ENCODE measurements at regions of chr1 and their contacts with region 1.

Region 1: GRCh38 chr1:206725109-206725963 is 40.6 kb downstream of the MAPKAPK2 start:
- DNase-seq: peak in 4 of 5 donors; percentile 47 to 60 (median 56)
- H3K4me3 ChIP-seq: no peak overlapping the region
- H3K4me3 Mint-ChIP-seq: peak overlapping the region in 2 of 8 donors; percentile 43 to 57
- H3K27ac ChIP-seq: no peak overlapping the region
- H3K27ac Mint-ChIP-seq: peak overlapping the region in 6 of 7 donors; percentile 60 to 90 (median 76)
- H3K4me1 ChIP-seq: peaks cover 32% of the 10 kb centered on the region
- H3K4me1 Mint-ChIP-seq: peaks cover 33 to 61% (median 46%) of the 10 kb centered on the region in 4 donors
- H3K27me3 ChIP-seq: no peaks in the 10 kb centered on the region
- H3K27me3 Mint-ChIP-seq: no peaks in the 10 kb centered on the region

Region 2: DNA sequence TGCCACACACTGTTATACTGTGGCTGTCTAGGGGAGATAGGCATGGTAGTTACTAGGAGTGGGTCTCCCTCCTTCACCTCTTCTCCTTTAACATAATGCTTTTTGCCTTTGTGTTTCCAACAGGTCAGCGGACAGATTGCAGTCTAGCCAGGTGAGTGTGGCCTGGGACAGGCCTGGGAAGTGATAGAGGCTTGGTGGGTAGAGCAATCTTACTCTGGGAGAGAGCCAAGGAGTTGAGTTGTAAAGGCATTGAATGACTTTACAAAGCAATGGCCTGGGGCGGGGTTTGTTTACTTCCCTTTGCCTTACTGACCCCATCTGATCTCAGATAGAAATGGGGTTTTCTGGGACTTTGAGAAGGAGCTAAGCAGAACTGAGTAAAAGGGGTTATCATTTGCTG is 306.1 kb before region 1 on chr1:
- CTCF ChIA-PET with region 1: no interaction called
- POLR2A ChIA-PET with region 1: no interaction called
- intact Hi-C with region 1: no loop called
- DNase-seq: no peak
- H3K4me3 ChIP-seq: no peak overlapping the region
- H3K4me3 Mint-ChIP-seq: no peak overlapping the region
- H3K27ac ChIP-seq: no peak overlapping the region
- H3K27ac Mint-ChIP-seq: peak overlapping the region in 1 of 7 donors; percentile 67
- H3K4me1 ChIP-seq: no peaks in the 10 kb centered on the region
- H3K4me1 Mint-ChIP-seq: no peaks in the 10 kb centered on the region
- H3K27me3 ChIP-seq: no peaks in the 10 kb centered on the region
- H3K27me3 Mint-ChIP-seq: no peaks in the 10 kb centered on the region

Region 3: GRCh38 chr1:206706298-206706791 is 19.0 kb before region 1 on chr1:
- CTCF ChIA-PET with region 1: interaction called, 92 read pairs
- POLR2A ChIA-PET with region 1: no interaction called
- intact Hi-C with region 1: no loop called
- DNase-seq: no peak
- H3K4me3 ChIP-seq: no peak overlapping the region
- H3K4me3 Mint-ChIP-seq: peak overlapping the region in 4 of 8 donors; percentile 47 to 69 (median 62)
- H3K27ac ChIP-seq: no peak overlapping the region
- H3K27ac Mint-ChIP-seq: peak overlapping the region in 5 of 7 donors; percentile 14 to 39 (median 28)
- H3K4me1 ChIP-seq: peaks cover 89% of the 10 kb centered on the region
- H3K4me1 Mint-ChIP-seq: peaks cover 70 to 90% (median 81%) of the 10 kb centered on the region in 4 donors
- H3K27me3 ChIP-seq: no peaks in the 10 kb centered on the region
- H3K27me3 Mint-ChIP-seq: no peaks in the 10 kb centered on the region

Region 4: DNA sequence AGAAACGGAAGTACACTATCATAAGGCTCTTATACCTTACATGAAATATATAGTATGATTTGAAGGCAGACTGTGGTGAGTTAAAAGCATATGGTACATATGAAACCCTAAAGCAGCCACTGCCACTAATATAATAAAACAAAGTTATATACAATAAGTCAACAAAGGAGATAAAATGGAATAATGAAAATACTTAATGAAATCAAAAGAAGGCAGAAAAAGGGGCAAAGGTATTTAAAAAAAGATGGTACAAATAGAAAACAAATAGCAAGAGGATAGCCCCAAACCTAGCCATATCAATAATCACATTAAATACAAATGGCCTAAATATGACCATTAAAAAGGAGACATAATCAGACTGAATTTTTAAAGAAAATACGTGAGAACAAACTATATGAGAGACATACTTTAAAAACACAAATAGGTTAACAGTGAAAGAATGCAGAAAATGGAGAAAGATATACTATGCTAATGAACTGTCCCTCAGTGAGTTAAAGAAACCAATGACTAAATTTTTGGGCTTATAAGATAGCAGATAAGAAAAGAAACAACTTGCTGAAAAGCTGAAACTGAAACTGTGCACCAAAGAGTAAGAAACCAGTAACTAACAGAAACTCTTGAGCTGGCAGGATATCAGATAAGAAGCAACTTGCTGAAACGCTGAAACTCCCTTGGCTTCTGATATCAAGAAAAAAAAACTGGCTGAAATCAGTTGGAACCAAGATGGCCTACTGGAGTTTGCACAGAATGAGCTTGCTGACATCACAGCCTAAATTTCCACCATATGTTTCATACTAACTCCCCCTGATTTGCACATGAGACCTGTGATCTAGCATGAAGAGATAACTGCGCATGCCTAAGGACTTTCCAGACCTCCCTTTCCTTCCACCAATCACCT is 91.3 kb after region 1 on chr1:
- CTCF ChIA-PET with region 1: interaction called, 351 read pairs
- POLR2A ChIA-PET with region 1: no interaction called
- intact Hi-C with region 1: no loop called
- DNase-seq: peak; percentile 53 to 75 (median 68)
- H3K4me3 ChIP-seq: no peak overlapping the region
- H3K4me3 Mint-ChIP-seq: peak overlapping the region; percentile 7 to 67 (median 55)
- H3K27ac ChIP-seq: peak overlapping the region; percentile 40
- H3K27ac Mint-ChIP-seq: peak overlapping the region; percentile 74 to 92 (median 88)
- H3K4me1 ChIP-seq: peaks cover 19% of the 10 kb centered on the region
- H3K4me1 Mint-ChIP-seq: peaks cover 17 to 19% (median 19%) of the 10 kb centered on the region in 4 donors
- H3K27me3 ChIP-seq: no peaks in the 10 kb centered on the region
- H3K27me3 Mint-ChIP-seq: no peaks in the 10 kb centered on the region

Region 5: GRCh38 chr1:206865013-206865671 is 139.8 kb after region 1 on chr1 and contains the start of gene IL20:
- CTCF ChIA-PET with region 1: interaction called, 5 read pairs
- POLR2A ChIA-PET with region 1: no interaction called
- intact Hi-C with region 1: loop called (anchors 1 kb)
- DNase-seq: peak; percentile 73 to 79 (median 77)
- H3K4me3 ChIP-seq: no peak within 1 kb of the TSS
- H3K4me3 Mint-ChIP-seq: peak within 1 kb of the TSS in 1 of 8 donors; percentile 6
- H3K27ac ChIP-seq: no peak within 1 kb of the TSS
- H3K27ac Mint-ChIP-seq: peak within 1 kb of the TSS in 2 of 7 donors; percentile 15 to 55
- H3K4me1 ChIP-seq: no peaks in the 10 kb centered on the region
- H3K4me1 Mint-ChIP-seq: peaks cover 0 to 5% (median 4%) of the 10 kb centered on the region in 4 donors
- H3K27me3 ChIP-seq: no peaks in the 10 kb centered on the region
- H3K27me3 Mint-ChIP-seq: peaks cover 16% of the 10 kb centered on the region in 2 donors
- total RNA-seq, gene IL20: not detected

Region 6: GRCh38 chr1:206925106-206925736 is 199.9 kb after region 1 on chr1:
- CTCF ChIA-PET with region 1: interaction called, 11 read pairs
- POLR2A ChIA-PET with region 1: interaction called, 3 read pairs
- intact Hi-C with region 1: no loop called
- DNase-seq: peak; percentile 42 to 61 (median 55)
- H3K4me3 ChIP-seq: no peak overlapping the region
- H3K4me3 Mint-ChIP-seq: no peak overlapping the region
- H3K27ac ChIP-seq: no peak overlapping the region
- H3K27ac Mint-ChIP-seq: no peak overlapping the region
- H3K4me1 ChIP-seq: peaks cover 56% of the 10 kb centered on the region
- H3K4me1 Mint-ChIP-seq: peaks cover 13 to 27% (median 25%) of the 10 kb centered on the region in 4 donors
- H3K27me3 ChIP-seq: no peaks in the 10 kb centered on the region
- H3K27me3 Mint-ChIP-seq: no peaks in the 10 kb centered on the region

Region 7: DNA sequence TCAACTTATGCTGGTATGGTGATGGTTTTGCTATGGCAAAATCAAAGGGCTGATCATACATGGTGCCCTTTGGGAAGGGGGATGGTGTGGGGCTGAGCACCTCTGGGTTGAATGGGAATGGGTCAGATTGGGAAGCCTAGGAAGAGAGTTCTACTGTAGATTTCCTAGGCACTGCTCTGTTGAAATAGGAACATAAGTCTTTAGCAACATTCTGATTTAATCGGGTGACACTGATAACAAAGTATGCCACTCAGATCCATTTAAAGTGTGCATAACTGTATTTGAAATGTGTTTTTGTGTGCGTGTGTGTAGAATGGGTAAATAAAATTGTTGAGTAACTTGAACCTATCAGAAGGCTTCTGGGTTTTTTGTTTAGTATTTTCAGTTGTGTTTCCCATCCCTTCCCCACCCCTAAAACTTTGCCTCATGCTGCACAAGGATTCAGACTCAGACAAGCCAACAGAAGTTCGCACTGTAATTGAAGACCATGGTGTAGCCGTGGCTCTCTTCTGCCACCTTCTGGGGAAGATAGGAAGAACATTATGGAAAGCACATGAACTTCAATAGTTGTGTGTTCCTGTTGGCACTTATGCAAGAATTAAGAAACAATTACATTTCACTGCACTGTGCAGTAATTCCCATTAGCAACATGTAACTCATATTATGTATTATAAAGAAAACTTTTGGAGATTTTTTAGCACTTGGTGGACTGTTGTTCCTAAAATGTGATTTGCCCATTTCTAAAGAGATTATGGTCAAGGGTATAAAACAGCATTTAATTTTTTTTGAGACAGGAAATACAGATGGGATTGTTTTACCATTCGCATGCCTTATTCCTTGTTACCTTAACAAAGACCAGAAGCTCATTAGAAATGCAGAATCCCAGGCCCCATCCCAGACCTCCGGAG is 352.4 kb after region 1 on chr1:
- CTCF ChIA-PET with region 1: no interaction called
- POLR2A ChIA-PET with region 1: no interaction called
- intact Hi-C with region 1: loop called (anchors 5 kb)
- DNase-seq: peak; percentile 69 to 75 (median 72)
- H3K4me3 ChIP-seq: no peak overlapping the region
- H3K4me3 Mint-ChIP-seq: no peak overlapping the region
- H3K27ac ChIP-seq: no peak overlapping the region
- H3K27ac Mint-ChIP-seq: no peak overlapping the region
- H3K4me1 ChIP-seq: no peaks in the 10 kb centered on the region
- H3K4me1 Mint-ChIP-seq: peaks cover 0 to 2% (median under 1%) of the 10 kb centered on the region in 4 donors
- H3K27me3 ChIP-seq: no peaks in the 10 kb centered on the region
- H3K27me3 Mint-ChIP-seq: peaks cover 7 to 11% of the 10 kb centered on the region in 2 donors